Heart right ventricle (tissue), 16 donors: ENCODE measurements at regions of chr22 and their contacts with region 1.

Region 1: GRCh38 chr22:41411021-41411851 is 29.5 kb downstream of the TEF start:
- DNase-seq: no peak
- ATAC-seq: peak in 5 of 8 donors; percentile 1 to 49 (median 5)
- H3K4me3 ChIP-seq: no peak overlapping the region
- H3K27ac ChIP-seq: peak overlapping the region; percentile 95 to 100 (median 100)
- H3K4me1 ChIP-seq: peaks cover 18 to 59% (median 46%) of the 10 kb centered on the region in 9 donors
- H3K27me3 ChIP-seq: no peaks in the 10 kb centered on the region
- CTCF ChIP-seq: no peak

Region 2: DNA sequence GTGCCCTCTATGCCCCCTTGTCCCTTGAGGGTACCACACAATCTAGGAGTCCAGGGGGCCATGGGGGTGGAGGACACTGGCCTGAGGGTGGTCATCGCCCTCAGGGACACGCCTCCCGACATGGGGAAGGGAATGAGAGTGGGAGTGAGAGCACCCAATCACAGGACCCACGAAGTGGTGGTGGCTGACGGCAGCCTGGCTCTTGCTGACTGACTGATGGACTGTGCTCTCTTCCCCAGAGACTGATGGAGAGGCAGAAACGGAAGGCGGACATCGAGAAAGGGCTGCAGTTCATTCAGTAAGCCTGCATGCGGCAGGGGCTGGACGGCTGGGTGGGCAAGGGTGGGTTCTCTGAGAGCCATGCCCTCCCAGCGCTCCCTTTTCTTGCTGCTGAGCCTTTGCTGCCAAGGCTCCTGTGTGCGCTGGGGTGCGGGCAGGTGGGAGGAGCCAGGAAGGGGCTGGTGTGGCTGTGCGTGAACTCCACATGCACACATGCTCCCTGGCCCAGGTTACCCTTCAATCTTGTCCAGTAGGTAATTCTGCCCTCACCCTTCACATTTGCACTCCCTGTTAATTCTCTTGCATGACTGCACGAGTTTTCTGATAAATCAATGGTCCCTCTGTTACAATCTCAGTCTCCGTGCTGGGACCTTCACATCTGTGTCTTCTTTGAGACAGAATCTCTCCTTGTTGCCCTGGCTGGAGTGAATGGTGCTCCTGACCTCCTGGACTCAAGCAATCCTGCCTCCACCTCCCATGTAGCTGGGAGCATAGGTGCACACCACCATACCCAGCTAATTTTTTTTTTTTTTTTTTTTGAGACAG is 90.6 kb before region 1 on chr22:
- intact Hi-C with region 1: no loop called
- DNase-seq: no peak
- ATAC-seq: no peak
- H3K4me3 ChIP-seq: no peak overlapping the region
- H3K27ac ChIP-seq: no peak overlapping the region
- H3K4me1 ChIP-seq: peaks cover 0 to 7% (median 0%) of the 10 kb centered on the region in 9 donors
- H3K27me3 ChIP-seq: no peaks in the 10 kb centered on the region
- CTCF ChIP-seq: no peak

Region 3: GRCh38 chr22:41448189-41448808 is 37.1 kb after region 1 on chr22:
- intact Hi-C with region 1: loop called in 2 of 10 experiments (anchors 2 kb)
- DNase-seq: peak; percentile 93 to 98
- ATAC-seq: peak; percentile 75 to 87 (median 81)
- H3K4me3 ChIP-seq: peak overlapping the region; percentile 61 to 99 (median 96)
- H3K27ac ChIP-seq: peak overlapping the region; percentile 98 to 100 (median 100)
- H3K4me1 ChIP-seq: peaks cover 0 to 23% (median 16%) of the 10 kb centered on the region in 9 donors
- H3K27me3 ChIP-seq: no peaks in the 10 kb centered on the region
- CTCF ChIP-seq: no peak